Activated CD4-positive, alpha-beta memory T cell treated with anti-CD3 and anti-CD28 coated beads for 36 hours (primary cell): ENCODE measurements at regions of chr10 and their contacts with region 1.

Region 1: GRCh38 chr10:119305860-119306513 is 98.6 kb downstream of the GRK5 start:
- DNase-seq: peak; percentile 95
- H3K4me3 Mint-ChIP-seq: peak overlapping the region; percentile 63
- H3K27ac Mint-ChIP-seq: peak overlapping the region; percentile 100
- H3K4me1 Mint-ChIP-seq: peaks cover 67% of the 10 kb centered on the region
- H3K27me3 Mint-ChIP-seq: no peaks in the 10 kb centered on the region

Region 2: GRCh38 chr10:119131512-119132240 is 174.3 kb before region 1 on chr10:
- CTCF ChIA-PET with region 1: no interaction called
- POLR2A ChIA-PET with region 1: interaction called, 3 read pairs
- intact Hi-C with region 1: loop called (anchors 2 kb)
- DNase-seq: peak; percentile 76
- H3K4me3 Mint-ChIP-seq: peak overlapping the region; percentile 80
- H3K27ac Mint-ChIP-seq: peak overlapping the region; percentile 100
- H3K4me1 Mint-ChIP-seq: peaks cover 60% of the 10 kb centered on the region
- H3K27me3 Mint-ChIP-seq: no peaks in the 10 kb centered on the region

Region 3: DNA sequence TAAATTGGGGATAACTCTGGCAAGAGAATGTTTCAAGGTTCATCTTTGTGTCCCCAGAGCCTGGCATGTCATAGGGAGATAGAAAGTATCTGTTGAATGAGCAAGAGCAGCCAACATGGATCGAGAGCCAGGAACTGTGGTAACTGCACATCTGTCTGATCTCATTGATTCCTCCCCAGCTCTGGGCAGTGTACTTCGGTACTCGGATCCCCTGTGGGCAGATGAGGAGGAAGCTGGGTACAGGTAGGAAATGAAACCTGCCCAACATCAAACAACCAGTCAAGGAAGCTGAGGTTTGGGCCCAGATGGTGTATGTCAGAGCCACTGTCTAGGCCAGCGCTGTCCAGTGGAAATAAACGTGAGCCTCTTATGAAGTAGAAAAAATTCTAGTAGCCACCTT is 22.2 kb before region 1 on chr10:
- CTCF ChIA-PET with region 1: interaction called, 4 read pairs
- POLR2A ChIA-PET with region 1: interaction called, 5 read pairs
- intact Hi-C with region 1: loop called (anchors 1 kb)
- DNase-seq: peak; percentile 53
- H3K4me3 Mint-ChIP-seq: no peak overlapping the region
- H3K27ac Mint-ChIP-seq: peak overlapping the region; percentile 19
- H3K4me1 Mint-ChIP-seq: peaks cover 52% of the 10 kb centered on the region
- H3K27me3 Mint-ChIP-seq: no peaks in the 10 kb centered on the region

Region 4: GRCh38 chr10:119517235-119518141 is 211.5 kb after region 1 on chr10:
- CTCF ChIA-PET with region 1: no interaction called
- POLR2A ChIA-PET with region 1: no interaction called
- intact Hi-C with region 1: loop called (anchors 5 kb)
- DNase-seq: peak; percentile 85
- H3K4me3 Mint-ChIP-seq: peak overlapping the region; percentile 55
- H3K27ac Mint-ChIP-seq: peak overlapping the region; percentile 85
- H3K4me1 Mint-ChIP-seq: peaks cover 59% of the 10 kb centered on the region
- H3K27me3 Mint-ChIP-seq: no peaks in the 10 kb centered on the region

Region 5: GRCh38 chr10:119550827-119551226 is 244.8 kb after region 1 on chr10:
- CTCF ChIA-PET with region 1: no interaction called
- POLR2A ChIA-PET with region 1: no interaction called
- intact Hi-C with region 1: no loop called
- DNase-seq: no peak
- H3K4me3 Mint-ChIP-seq: no peak overlapping the region
- H3K27ac Mint-ChIP-seq: no peak overlapping the region
- H3K4me1 Mint-ChIP-seq: no peaks in the 10 kb centered on the region
- H3K27me3 Mint-ChIP-seq: no peaks in the 10 kb centered on the region

Region 6: GRCh38 chr10:119705434-119705831 is 399.4 kb after region 1 on chr10:
- CTCF ChIA-PET with region 1: no interaction called
- POLR2A ChIA-PET with region 1: no interaction called
- intact Hi-C with region 1: loop called (anchors 2 kb)
- DNase-seq: peak; percentile 51
- H3K4me3 Mint-ChIP-seq: peak overlapping the region; percentile 55
- H3K27ac Mint-ChIP-seq: peak overlapping the region; percentile 92
- H3K4me1 Mint-ChIP-seq: peaks cover 79% of the 10 kb centered on the region
- H3K27me3 Mint-ChIP-seq: no peaks in the 10 kb centered on the region

Region 7: GRCh38 chr10:119849031-119849789 is 543.2 kb after region 1 on chr10:
- CTCF ChIA-PET with region 1: no interaction called
- POLR2A ChIA-PET with region 1: no interaction called
- intact Hi-C with region 1: no loop called
- DNase-seq: no peak
- H3K4me3 Mint-ChIP-seq: no peak overlapping the region
- H3K27ac Mint-ChIP-seq: no peak overlapping the region
- H3K4me1 Mint-ChIP-seq: no peaks in the 10 kb centered on the region
- H3K27me3 Mint-ChIP-seq: no peaks in the 10 kb centered on the region